ENCODE measurements at regions of chr21 and their contacts with region 1.

Region 1: DNA sequence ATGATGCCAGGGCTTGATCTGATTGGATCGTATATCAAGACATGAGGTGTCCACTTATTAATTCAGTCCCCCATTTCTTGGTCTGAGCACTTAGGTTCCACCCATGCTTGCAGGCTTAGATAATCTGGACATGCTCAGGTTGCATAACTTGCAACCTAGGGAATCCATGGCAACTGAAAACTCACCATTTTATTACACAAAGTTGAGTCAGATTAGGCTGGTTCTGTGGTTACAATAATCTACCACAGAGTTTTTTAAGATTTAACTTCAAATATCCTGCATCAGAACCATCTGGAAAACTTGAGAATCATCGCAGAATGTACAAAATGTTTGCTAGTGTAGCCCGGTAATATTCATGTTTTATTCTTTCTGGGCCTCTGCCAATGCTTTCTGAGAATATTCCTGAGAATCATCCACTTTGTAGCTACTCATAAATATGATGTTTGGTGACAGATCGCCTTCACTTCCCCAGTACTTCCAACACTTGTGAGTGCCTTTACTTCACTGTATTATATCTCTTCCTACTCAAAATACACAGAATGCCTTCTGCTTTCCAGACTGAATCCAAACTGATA is 707.2 kb upstream of the ADAMTS5 start:
- DNase-seq: no peak
- ATAC-seq: no peak
- H3K4me3 ChIP-seq: no peak overlapping the region
- H3K4me3 Mint-ChIP-seq: no peak overlapping the region
- H3K27ac ChIP-seq: no peak overlapping the region
- H3K27ac Mint-ChIP-seq: no peak overlapping the region
- H3K4me1 ChIP-seq: no peaks in the 10 kb centered on the region
- H3K4me1 Mint-ChIP-seq: no peaks in the 10 kb centered on the region
- H3K27me3 ChIP-seq: no peaks in the 10 kb centered on the region
- H3K27me3 Mint-ChIP-seq: no peaks in the 10 kb centered on the region
- CTCF ChIP-seq: no peak

Region 2: GRCh38 chr21:27722095-27722494 is 48.0 kb after region 1 on chr21:
- CTCF ChIA-PET with region 1: no interaction called
- POLR2A ChIA-PET with region 1: no interaction called
- intact Hi-C with region 1: loop called in 1 of 2 experiments (anchors 10 kb)
- DNase-seq: no peak
- ATAC-seq: no peak
- H3K4me3 ChIP-seq: no peak overlapping the region
- H3K4me3 Mint-ChIP-seq: no peak overlapping the region
- H3K27ac ChIP-seq: no peak overlapping the region
- H3K27ac Mint-ChIP-seq: no peak overlapping the region
- H3K4me1 ChIP-seq: no peaks in the 10 kb centered on the region
- H3K4me1 Mint-ChIP-seq: no peaks in the 10 kb centered on the region
- H3K27me3 ChIP-seq: no peaks in the 10 kb centered on the region
- H3K27me3 Mint-ChIP-seq: no peaks in the 10 kb centered on the region
- CTCF ChIP-seq: no peak

Region 3: DNA sequence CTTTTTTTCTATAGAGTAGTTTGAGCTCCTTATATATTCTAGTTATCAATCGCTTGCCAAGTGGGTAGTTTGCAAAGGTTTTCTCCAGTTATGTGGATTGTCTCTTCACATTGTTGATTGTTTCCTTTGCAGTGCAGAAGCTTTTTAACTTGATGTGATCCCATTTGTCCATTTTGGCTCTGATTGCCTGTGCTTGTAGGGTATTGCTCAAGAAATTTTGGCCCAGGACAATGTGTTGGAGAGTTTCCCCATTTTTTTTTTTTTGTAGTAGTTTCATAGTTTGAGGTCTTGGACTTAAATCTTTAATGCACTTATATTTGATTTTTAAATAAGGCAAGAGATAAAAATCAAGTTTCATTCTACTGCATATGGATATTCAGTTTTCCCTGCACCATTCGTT is 67.6 kb after region 1 on chr21:
- CTCF ChIA-PET with region 1: no interaction called
- POLR2A ChIA-PET with region 1: no interaction called
- intact Hi-C with region 1: no loop called
- DNase-seq: no peak
- ATAC-seq: no peak
- H3K4me3 ChIP-seq: no peak overlapping the region
- H3K4me3 Mint-ChIP-seq: no peak overlapping the region
- H3K27ac ChIP-seq: no peak overlapping the region
- H3K27ac Mint-ChIP-seq: no peak overlapping the region
- H3K4me1 ChIP-seq: no peaks in the 10 kb centered on the region
- H3K4me1 Mint-ChIP-seq: no peaks in the 10 kb centered on the region
- H3K27me3 ChIP-seq: no peaks in the 10 kb centered on the region
- H3K27me3 Mint-ChIP-seq: no peaks in the 10 kb centered on the region
- CTCF ChIP-seq: no peak